HepG2 (cell line): ENCODE measurements at regions of chr11 and their contacts with region 1.

Region 1: GRCh38 chr11:63592975-63593395 is 21.2 kb downstream of the PLAAT3 start:
- DNase-seq: no peak
- ATAC-seq: peak; percentile 75
- H3K4me3 ChIP-seq: no peak overlapping the region
- H3K27ac ChIP-seq: no peak overlapping the region
- H3K4me1 ChIP-seq: no peaks in the 10 kb centered on the region
- H3K27me3 ChIP-seq: no peaks in the 10 kb centered on the region; a peak in 1 of 5 replicates
- CTCF ChIP-seq: peak; percentile 75
- EP300 ChIP-seq: no peak
- POLR2A ChIP-seq: no peak
- RAD21 ChIP-seq: peak; percentile 75

Region 2: DNA sequence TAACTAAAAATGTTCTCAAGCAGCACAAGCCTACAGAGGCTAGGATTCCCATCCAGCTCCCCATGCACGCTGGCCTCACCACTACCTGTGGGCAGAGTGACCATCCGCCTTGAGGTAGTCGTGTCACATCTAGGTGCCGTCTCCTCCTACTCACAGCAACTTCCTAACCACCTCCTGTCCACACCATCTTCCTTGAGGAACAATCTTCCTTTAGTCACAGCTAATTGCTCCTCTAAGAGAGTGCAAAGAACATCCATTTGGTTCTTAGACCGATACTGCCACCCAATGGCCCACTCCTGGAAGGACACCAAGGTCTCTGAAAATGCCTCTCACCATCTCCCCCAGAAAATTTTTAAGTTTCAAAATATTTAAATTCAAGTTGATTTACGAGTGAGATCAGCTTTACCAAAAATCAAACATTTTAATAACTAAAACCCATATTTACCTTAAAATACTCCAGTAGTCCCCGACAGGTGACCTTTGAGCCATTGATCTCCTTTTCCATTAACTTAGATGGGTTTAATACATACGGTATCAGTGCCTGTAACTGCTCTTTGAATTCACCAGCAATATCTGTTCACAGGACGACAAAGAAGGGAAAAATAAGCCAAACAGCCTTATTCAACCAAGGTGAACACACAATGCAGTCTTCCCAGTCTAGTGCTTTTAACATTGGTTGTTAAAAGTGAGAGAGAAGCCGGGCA is 42.9 kb after region 1 on chr11:
- CTCF ChIA-PET with region 1: interaction called, 24 read pairs
- POLR2A ChIA-PET with region 1: no interaction called
- in situ Hi-C with region 1: no loop called
- intact Hi-C with region 1: loop called (anchors 1 kb)
- DNase-seq: peak; percentile 47
- ATAC-seq: peak; percentile 77
- H3K4me3 ChIP-seq: no peak overlapping the region
- H3K27ac ChIP-seq: no peak overlapping the region
- H3K4me1 ChIP-seq: peaks cover 6% of the 10 kb centered on the region; the same call in 1 of the 2 replicates
- H3K27me3 ChIP-seq: no peaks in the 10 kb centered on the region; a peak in 2 of 5 replicates
- CTCF ChIP-seq: peak; percentile 89
- EP300 ChIP-seq: no peak
- POLR2A ChIP-seq: no peak
- RAD21 ChIP-seq: peak; percentile 88